Activated T-helper 2 cell treated with anti-CD3 and anti-CD28 coated beads, Interferon-gamma antibody, Interleukin-2, Interleukin-4, amounts not matched to agents 10 μg/mL and 5 μg/mL and 100 μg/mL, durations not matched to agents 14 hours and 24 hours and 36 hours (primary cell): ENCODE measurements at regions of chr2 and their contacts with region 1.

Region 1: GRCh38 chr2:136327162-136327852 is 209.4 kb upstream of the CXCR4 start:
- DNase-seq: peak; percentile 76
- H3K4me3 Mint-ChIP-seq: peak overlapping the region; percentile 57
- H3K27ac Mint-ChIP-seq: peak overlapping the region; percentile 93
- H3K4me1 Mint-ChIP-seq: peaks cover 62% of the 10 kb centered on the region
- H3K27me3 Mint-ChIP-seq: no peaks in the 10 kb centered on the region

Region 2: DNA sequence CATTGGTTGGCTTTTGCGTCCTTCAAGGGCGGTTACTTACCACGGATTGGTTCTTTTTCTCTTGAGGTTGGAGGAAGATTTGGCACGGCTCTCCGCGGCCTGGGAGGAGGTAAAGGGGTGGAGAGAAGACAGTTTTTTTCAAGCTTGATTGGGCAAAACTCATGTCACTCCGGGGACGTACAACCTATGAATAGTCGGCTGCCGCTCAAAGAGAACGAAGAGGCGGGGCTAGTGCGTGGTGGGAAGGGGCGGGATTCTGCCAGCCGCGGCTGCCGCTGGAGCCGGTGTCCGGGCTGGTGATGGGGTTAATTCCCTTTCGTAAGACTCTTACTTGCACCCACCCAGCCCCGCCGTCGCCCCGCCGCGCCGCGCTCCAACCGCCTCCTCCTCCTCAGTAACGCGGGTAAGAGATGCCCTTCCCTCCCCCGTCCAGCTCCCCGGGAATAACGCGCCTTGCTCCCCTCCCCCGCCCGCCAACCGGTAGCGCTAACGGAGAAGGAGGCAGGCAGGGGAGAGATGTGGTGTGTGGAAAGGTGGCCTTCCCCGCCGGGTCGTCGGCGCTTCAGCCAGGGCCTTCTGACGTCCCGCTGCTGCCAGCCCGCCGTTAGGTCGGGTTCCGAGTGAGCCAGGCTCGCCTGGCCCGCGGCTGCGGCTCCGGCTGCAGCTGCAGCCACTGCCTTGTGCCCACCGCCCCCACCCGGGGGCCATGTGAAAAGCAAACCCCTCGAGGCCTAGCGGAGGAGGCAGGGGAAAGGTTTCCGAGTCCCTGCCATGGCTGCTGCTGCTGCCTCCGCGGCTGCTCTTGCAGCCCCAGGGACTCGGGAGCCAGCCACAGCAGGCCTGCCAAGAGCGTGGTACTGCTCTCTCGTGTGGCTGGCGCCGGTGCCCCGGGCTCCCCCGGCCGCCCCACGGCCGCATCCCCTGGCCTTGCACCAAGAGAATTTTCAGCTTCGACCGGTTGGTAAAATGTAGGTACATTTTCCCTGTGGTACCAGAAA is 795.8 kb before region 1 on chr2 and contains the start of gene R3HDM1:
- intact Hi-C with region 1: loop called (anchors 10 kb)
- DNase-seq: peak; percentile 96
- H3K4me3 Mint-ChIP-seq: no peak within 1 kb of the TSS
- H3K27ac Mint-ChIP-seq: no peak within 1 kb of the TSS
- H3K4me1 Mint-ChIP-seq: peaks cover 27% of the 10 kb centered on the region
- H3K27me3 Mint-ChIP-seq: no peaks in the 10 kb centered on the region
- total RNA-seq, gene R3HDM1: 47.8 and 49.2 TPM in 2 replicates

Region 3: DNA sequence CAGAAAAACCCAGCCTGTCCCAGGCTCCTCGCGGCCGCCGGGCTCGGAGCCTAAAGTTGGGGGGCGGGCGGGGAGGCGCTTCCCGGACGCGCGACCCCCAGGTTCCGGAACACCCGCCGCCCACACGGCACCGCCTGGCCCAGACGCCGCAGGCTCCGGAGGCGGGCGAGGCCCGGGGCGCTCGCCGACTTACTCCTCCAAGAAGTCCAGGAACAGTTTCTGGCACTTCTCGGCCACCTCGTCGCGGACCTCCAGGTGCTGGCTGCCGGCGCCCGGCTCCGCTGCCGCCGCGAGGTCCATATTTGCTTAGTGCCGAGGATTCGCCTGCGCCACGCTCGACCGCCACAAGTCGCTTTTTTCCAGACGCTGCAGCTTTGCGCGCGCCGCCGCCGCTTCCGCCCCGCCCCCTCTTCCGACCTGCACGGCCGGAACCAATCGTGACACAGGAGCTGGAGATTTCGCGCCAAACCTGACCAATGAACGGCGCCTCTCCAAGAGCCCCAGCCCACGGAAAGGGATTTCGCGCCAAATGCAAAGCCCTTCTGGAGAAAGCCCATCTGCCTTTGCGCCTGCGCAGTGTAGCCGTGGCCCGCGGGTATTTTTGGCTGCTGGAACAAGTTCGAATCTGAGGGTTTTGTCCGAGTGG is 451.1 kb before region 1 on chr2 and contains the start of gene MCM6:
- intact Hi-C with region 1: loop called (anchors 1 kb)
- DNase-seq: peak; percentile 98
- H3K4me3 Mint-ChIP-seq: peak within 1 kb of the TSS; percentile 95
- H3K27ac Mint-ChIP-seq: peak within 1 kb of the TSS; percentile 92
- H3K4me1 Mint-ChIP-seq: peaks cover 37% of the 10 kb centered on the region
- H3K27me3 Mint-ChIP-seq: no peaks in the 10 kb centered on the region
- total RNA-seq, gene MCM6: 190 and 191 TPM in 2 replicates

Region 4: GRCh38 chr2:135904341-135904989 is 422.8 kb before region 1 on chr2:
- intact Hi-C with region 1: no loop called
- DNase-seq: no peak
- H3K4me3 Mint-ChIP-seq: no peak overlapping the region
- H3K27ac Mint-ChIP-seq: no peak overlapping the region
- H3K4me1 Mint-ChIP-seq: no peaks in the 10 kb centered on the region
- H3K27me3 Mint-ChIP-seq: no peaks in the 10 kb centered on the region

Region 5: DNA sequence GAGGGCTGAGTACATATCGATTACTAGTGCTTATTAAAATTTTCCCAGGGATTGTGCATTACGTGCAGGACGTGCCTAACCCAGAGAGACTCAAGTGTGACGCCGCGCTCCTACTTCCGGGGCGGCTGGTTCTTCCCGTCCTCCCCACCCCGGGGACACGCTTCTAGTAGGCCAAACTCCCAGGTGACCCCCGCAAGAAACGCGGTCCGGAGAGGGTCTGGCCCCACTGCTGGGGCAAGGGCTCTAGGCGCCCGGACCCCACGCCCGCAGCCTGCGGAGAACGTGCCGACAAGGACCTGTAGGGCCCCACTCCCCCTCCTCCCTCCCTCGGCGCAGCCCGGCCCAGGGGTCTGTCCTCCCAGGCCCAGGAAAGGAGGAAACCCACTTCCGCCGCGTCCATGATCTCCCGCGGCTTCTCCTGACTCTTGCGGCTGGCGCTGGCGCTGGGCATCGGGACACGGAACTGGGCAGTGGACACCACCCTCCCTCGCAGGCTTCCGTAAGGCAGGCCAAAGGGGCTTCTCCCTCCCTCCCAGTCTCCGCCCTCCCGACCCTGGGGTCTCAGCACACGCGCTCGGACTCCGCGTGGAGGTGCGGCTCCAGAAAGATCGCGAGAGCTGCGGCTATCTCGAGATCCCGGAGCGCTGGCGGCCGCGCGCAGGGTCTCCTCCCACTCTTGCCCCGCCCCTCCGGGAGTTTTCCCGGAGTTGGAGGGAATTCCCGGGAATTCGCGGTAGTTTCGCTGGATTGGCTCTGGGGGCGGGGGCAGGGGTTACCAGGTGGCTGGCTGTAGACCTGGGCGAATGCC is 342.1 kb before region 1 on chr2 and contains the start of gene DARS1:
- intact Hi-C with region 1: loop called (anchors 1 kb)
- DNase-seq: peak; percentile 80
- H3K4me3 Mint-ChIP-seq: peak within 1 kb of the TSS; percentile 94
- H3K27ac Mint-ChIP-seq: peak within 1 kb of the TSS; percentile 98
- H3K4me1 Mint-ChIP-seq: peaks cover 41% of the 10 kb centered on the region
- H3K27me3 Mint-ChIP-seq: no peaks in the 10 kb centered on the region
- total RNA-seq, gene DARS1: 179 and 183 TPM in 2 replicates

Region 6: GRCh38 chr2:136135921-136136906 is 191.1 kb before region 1 on chr2:
- intact Hi-C with region 1: loop called (anchors 1 kb)
- DNase-seq: peak; percentile 47
- H3K4me3 Mint-ChIP-seq: peak overlapping the region; percentile 13
- H3K27ac Mint-ChIP-seq: no peak overlapping the region
- H3K4me1 Mint-ChIP-seq: peaks cover 74% of the 10 kb centered on the region
- H3K27me3 Mint-ChIP-seq: peaks cover 33% of the 10 kb centered on the region

Region 7: GRCh38 chr2:136281281-136282114 is 45.8 kb before region 1 on chr2:
- intact Hi-C with region 1: loop called (anchors 2 kb)
- DNase-seq: peak; percentile 25
- H3K4me3 Mint-ChIP-seq: no peak overlapping the region
- H3K27ac Mint-ChIP-seq: peak overlapping the region; percentile 77
- H3K4me1 Mint-ChIP-seq: peaks cover 45% of the 10 kb centered on the region
- H3K27me3 Mint-ChIP-seq: no peaks in the 10 kb centered on the region

Region 8: GRCh38 chr2:136378712-136379595 is 51.6 kb after region 1 on chr2:
- intact Hi-C with region 1: loop called (anchors 1 kb)
- DNase-seq: peak; percentile 66
- H3K4me3 Mint-ChIP-seq: no peak overlapping the region
- H3K27ac Mint-ChIP-seq: no peak overlapping the region
- H3K4me1 Mint-ChIP-seq: peaks cover 82% of the 10 kb centered on the region
- H3K27me3 Mint-ChIP-seq: no peaks in the 10 kb centered on the region